Activated CD8-positive, alpha-beta memory T cell treated with anti-CD3 and anti-CD28 coated beads, Interleukin-2, amount 10 ng/mL, durations not matched to agents 7 days and 5 days (primary cell): ENCODE measurements at regions of chr3 and their contacts with region 1.

Region 1: DNA sequence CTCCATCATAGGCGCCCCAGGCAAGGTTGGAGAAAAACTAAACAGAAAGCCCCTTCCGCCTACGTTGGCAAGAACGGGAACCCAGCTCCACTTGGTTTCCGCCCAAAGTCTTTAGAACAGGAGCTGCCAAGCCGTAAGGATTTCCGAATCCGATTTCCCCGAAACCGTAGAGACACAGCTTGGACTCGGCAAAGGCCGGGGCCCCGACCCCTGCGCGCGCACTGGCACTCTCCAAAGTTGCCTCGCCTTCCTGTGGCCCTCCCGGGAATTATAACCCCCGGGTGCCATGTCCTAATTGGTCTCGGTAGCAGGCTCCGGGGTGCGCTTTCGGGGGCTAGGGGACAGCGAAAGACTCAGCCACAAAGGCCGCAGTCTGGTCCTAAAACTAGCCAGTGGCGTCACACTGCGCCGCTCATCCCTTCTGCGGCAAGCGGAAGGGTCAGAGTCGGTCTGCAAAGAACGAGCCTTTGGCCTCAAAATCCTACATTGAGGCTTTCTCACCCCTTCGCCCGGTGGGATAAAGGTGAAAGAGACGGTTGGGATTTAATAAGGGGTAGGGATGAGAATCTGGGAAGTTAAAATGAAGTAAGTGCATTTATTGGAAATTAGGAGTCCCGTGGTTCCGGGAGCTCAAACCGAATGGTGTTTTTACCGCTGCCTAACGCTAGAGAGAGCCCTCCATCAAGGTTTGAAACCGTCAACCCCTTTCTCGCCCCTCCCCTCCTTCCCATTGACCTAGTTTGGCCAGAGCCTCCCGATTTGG is 6.8 kb downstream of the BCL6 start:
- DNase-seq: peak; percentile 87
- ATAC-seq: peak; percentile 37
- H3K4me3 Mint-ChIP-seq: peak overlapping the region; percentile 98
- H3K27ac Mint-ChIP-seq: peak overlapping the region; percentile 99
- H3K4me1 Mint-ChIP-seq: peaks cover 38% of the 10 kb centered on the region
- H3K27me3 Mint-ChIP-seq: peaks cover 10% of the 10 kb centered on the region

Region 2: DNA sequence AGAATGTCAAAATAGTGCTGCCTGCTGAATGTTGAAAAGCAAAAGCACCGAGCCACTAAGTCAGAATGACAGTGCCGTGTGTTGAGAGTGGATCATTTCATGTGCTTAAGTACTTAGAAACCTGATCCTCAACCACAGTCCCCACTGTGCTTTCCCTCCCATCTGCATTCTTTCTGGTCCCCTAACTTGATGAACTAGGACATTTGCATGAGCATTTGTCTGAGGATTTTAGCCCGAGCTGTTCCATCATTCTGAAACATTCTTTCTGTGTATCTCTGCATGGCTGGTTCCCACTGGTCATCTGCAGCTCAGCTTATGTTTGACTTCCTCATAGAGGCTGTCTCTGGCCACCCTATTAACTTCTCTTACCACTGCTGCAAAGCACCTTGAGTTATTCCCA is 110.3 kb before region 1 on chr3:
- CTCF ChIA-PET with region 1: no interaction called
- DNase-seq: no peak
- ATAC-seq: no peak
- H3K4me3 Mint-ChIP-seq: no peak overlapping the region
- H3K27ac Mint-ChIP-seq: no peak overlapping the region
- H3K4me1 Mint-ChIP-seq: no peaks in the 10 kb centered on the region
- H3K27me3 Mint-ChIP-seq: peaks cover 32% of the 10 kb centered on the region

Region 3: DNA sequence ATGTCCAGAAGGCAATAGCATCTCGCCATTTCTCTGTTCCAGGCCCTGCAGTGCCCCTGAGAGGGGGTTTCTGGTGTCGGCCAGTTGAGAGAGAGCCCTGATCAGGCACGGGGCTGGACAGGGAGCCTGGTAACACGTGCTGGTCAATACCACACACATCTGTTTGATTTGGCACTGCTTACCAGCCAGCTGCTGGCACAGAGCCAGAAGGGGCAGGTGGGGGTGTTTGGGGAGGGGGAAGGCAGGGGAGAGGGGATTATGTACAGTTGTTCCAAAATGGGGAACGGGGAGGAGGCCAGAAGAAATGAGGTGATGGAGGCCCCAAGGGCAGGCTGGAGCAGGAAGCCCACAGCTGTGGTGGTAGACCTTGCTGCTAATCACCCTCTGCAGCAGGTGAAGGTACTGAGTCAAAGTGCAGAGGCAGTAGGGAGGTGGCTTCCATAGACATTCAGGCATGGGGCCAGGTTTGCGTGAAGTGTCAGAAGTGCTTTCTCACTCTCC is 261.9 kb after region 1 on chr3:
- CTCF ChIA-PET with region 1: interaction called, 35 read pairs
- DNase-seq: peak; percentile 54
- ATAC-seq: peak; percentile 28
- H3K4me3 Mint-ChIP-seq: peak overlapping the region; percentile 67
- H3K27ac Mint-ChIP-seq: peak overlapping the region; percentile 97
- H3K4me1 Mint-ChIP-seq: peaks cover 68% of the 10 kb centered on the region
- H3K27me3 Mint-ChIP-seq: no peaks in the 10 kb centered on the region

Region 4: GRCh38 chr3:188279502-188280335 is 541.2 kb after region 1 on chr3:
- CTCF ChIA-PET with region 1: interaction called, 22 read pairs
- DNase-seq: no peak
- ATAC-seq: no peak
- H3K4me3 Mint-ChIP-seq: no peak overlapping the region
- H3K27ac Mint-ChIP-seq: no peak overlapping the region
- H3K4me1 Mint-ChIP-seq: peaks cover 11% of the 10 kb centered on the region
- H3K27me3 Mint-ChIP-seq: peaks cover 2% of the 10 kb centered on the region

Region 5: GRCh38 chr3:188914552-188914951 is 1176.0 kb after region 1 on chr3:
- CTCF ChIA-PET with region 1: interaction called, 60 read pairs
- DNase-seq: no peak
- ATAC-seq: peak; percentile 70
- H3K4me3 Mint-ChIP-seq: no peak overlapping the region
- H3K27ac Mint-ChIP-seq: peak overlapping the region; percentile 48
- H3K4me1 Mint-ChIP-seq: peaks cover 43% of the 10 kb centered on the region
- H3K27me3 Mint-ChIP-seq: peaks cover 2% of the 10 kb centered on the region

Region 6: DNA sequence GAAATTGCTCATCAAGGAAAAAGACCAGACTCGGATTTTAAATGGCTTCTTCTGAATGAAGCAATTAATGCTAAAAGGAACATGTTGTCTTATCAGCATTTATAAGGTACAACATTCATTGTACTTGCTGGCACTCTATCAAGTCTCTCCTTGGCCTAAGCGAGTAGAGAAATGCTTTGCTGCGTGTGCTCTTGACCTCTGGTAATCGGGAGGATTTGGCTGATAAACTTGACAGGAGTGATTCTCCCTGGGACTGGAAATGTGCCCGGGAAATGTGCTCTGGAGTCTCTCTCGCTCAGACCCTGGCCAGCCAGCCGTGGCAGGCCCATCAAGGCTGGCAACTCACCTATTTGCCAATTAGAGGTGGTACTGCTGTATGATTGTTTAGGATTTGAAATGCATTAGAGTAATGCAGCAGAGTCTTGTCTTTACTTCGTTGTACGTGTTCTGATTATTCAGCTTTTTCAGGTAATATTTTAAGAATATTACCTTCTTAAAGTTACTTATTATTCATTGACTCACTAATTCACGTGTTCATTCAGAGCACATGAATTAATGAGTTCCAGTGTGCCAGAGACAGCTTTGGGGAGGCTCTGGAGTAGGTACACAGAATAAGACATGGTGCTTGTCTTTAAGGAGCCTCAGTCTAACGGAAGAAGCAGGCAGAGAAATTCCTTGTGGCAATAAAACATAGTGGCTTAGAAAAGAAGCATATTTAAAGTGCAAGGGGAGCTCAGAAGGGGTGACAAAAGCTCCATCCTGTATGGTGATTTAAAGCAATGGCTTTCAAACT is 1385.3 kb after region 1 on chr3:
- CTCF ChIA-PET with region 1: interaction called, 44 read pairs
- DNase-seq: no peak
- ATAC-seq: peak; percentile 48
- H3K4me3 Mint-ChIP-seq: peak overlapping the region; percentile 77
- H3K27ac Mint-ChIP-seq: peak overlapping the region; percentile 95
- H3K4me1 Mint-ChIP-seq: peaks cover 46% of the 10 kb centered on the region
- H3K27me3 Mint-ChIP-seq: no peaks in the 10 kb centered on the region